H1 (cell line): ENCODE measurements at regions of chr5 and their contacts with region 1.

Region 1: DNA sequence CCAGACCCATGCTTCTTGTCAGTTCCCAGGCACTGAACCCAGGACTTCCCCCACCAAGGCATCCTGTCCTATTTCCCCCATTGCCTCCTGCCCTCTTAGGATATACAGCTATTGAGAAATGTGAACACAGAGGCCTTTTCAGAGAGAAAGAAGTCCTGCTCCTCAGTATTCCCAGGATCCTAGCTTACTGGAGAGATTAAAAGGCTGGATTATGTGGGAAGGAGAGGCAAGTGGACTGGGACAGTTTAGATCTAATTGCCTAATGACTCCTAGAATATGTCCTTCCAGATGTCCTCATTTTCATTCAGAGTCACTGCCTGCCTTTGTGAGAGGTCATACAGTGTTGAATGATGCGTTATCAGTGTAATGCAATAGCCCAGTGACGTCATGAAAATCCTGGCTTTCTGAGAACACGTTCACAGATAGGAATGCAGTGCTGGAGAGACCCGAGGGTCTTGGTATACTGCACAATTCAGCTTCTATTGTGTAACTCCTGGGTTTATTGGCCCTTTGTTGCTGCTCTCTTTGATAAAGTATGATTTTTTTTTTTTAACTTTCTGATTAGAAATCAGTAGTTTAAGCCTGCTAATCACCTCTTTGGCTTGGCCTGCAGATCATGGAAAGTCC is 26.2 kb downstream of the WWC1 start:
- DNase-seq: no peak
- H3K4me3 ChIP-seq: no peak overlapping the region
- H3K27ac ChIP-seq: no peak overlapping the region
- H3K4me1 ChIP-seq: peaks cover 2 to 19% (median 4%) of the 10 kb centered on the region in 4 experiments; a peak in 5 of 7 replicates
- H3K27me3 ChIP-seq: no peaks in the 10 kb centered on the region
- CTCF ChIP-seq: no peak
- EP300 ChIP-seq: no peak
- POLR2A ChIP-seq: no peak
- RAD21 ChIP-seq: no peak

Region 2: GRCh38 chr5:168086104-168086610 is 231.5 kb before region 1 on chr5:
- CTCF ChIA-PET with region 1: no interaction called
- POLR2A ChIA-PET with region 1: no interaction called
- DNase-seq: no peak
- H3K4me3 ChIP-seq: no peak overlapping the region
- H3K27ac ChIP-seq: no peak overlapping the region
- H3K4me1 ChIP-seq: no peaks in the 10 kb centered on the region
- H3K27me3 ChIP-seq: peaks cover 0 to 1% (median 0%) of the 10 kb centered on the region in 4 experiments; a peak in 1 of 7 replicates
- CTCF ChIP-seq: peak in 1 of 3 experiments; percentile 5; a peak in 1 of 4 replicates
- EP300 ChIP-seq: no peak
- POLR2A ChIP-seq: no peak
- RAD21 ChIP-seq: peak; percentile 25 to 37; a peak in 3 of 4 replicates

Region 3: GRCh38 chr5:168301593-168302388 is 15.8 kb before region 1 on chr5:
- CTCF ChIA-PET with region 1: interaction called, 56 read pairs
- POLR2A ChIA-PET with region 1: interaction called, 5 read pairs
- DNase-seq: no peak
- H3K4me3 ChIP-seq: 0 out of 8 replicates have a peak overlapping the region, but pooled peaks of 1 of the 4 experiments have one; percentile 7
- H3K27ac ChIP-seq: no peak overlapping the region
- H3K4me1 ChIP-seq: peaks cover 15 to 41% (median 32%) of the 10 kb centered on the region in 4 experiments
- H3K27me3 ChIP-seq: no peaks in the 10 kb centered on the region
- CTCF ChIP-seq: no peak
- EP300 ChIP-seq: no peak
- POLR2A ChIP-seq: no peak
- RAD21 ChIP-seq: no peak